Activated CD4-positive, alpha-beta memory T cell treated with anti-CD3 and anti-CD28 coated beads for 36 hours (primary cell): ENCODE measurements at regions of chr3 and their contacts with region 1.

Region 1: GRCh38 chr3:133805527-133806475 is at the start of gene SRPRB:
- DNase-seq: peak; percentile 98
- H3K4me3 Mint-ChIP-seq: peak within 1 kb of the TSS; percentile 98
- H3K27ac Mint-ChIP-seq: peak within 1 kb of the TSS; percentile 94
- H3K4me1 Mint-ChIP-seq: peaks cover 37% of the 10 kb centered on the region
- H3K27me3 Mint-ChIP-seq: peaks cover 5% of the 10 kb centered on the region
- total RNA-seq, gene SRPRB: 65.7 to 66.7 TPM

Region 2: DNA sequence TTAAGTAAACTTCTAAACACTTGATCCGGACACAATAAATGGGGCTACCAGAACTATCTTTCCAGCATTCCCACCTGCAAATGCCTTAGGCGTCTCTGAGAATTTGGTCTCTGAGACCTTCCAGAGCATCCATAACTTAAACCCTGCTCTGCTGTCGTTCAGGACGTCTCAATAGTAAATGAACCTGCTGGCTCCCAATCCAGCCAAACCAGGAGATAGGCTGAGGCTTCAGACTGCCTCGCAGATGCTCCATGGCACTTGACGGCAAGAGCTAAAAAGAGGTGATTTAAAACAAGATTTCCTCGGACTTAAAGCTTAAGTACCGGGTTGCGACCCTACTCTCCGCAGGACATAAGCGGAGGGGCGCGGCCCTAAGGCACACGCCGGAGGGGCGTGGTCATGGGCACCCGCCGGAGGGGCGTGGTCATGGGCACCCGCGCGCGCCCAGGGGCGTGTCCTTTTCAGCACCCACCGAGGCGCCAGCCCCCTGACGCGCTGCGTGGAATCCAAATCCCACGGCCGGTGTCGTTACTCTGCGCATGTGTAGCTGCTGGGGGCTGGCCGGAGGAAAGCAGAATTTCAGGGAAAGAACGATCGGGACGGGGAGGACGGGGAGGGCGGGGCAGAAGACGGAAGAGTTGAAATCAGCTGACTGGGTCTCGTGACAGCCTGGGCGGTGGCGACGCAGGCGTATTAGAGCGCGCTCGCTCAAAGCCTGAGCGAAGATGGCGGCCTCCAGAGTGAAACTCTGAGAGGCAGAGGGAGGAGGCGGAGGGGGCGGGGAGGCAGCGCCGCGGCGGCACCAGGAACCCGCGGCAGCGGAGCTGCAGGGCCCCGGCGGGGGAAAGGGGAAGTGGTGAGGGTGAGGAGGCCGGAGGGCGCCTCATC is 1388.8 kb before region 1 on chr3 and contains the start of gene DNAJC13:
- CTCF ChIA-PET with region 1: no interaction called
- POLR2A ChIA-PET with region 1: no interaction called
- intact Hi-C with region 1: loop called (anchors 1 kb)
- DNase-seq: peak; percentile 94
- H3K4me3 Mint-ChIP-seq: peak within 1 kb of the TSS; percentile 98
- H3K27ac Mint-ChIP-seq: peak within 1 kb of the TSS; percentile 90
- H3K4me1 Mint-ChIP-seq: peaks cover 31% of the 10 kb centered on the region
- H3K27me3 Mint-ChIP-seq: no peaks in the 10 kb centered on the region
- total RNA-seq, gene DNAJC13: 33.5 to 34.5 TPM

Region 3: GRCh38 chr3:133494469-133494868 is 311.3 kb before region 1 on chr3:
- CTCF ChIA-PET with region 1: no interaction called
- POLR2A ChIA-PET with region 1: no interaction called
- intact Hi-C with region 1: loop called (anchors 5 kb)
- DNase-seq: peak; percentile 21
- H3K4me3 Mint-ChIP-seq: no peak overlapping the region
- H3K27ac Mint-ChIP-seq: no peak overlapping the region
- H3K4me1 Mint-ChIP-seq: peaks cover 41% of the 10 kb centered on the region
- H3K27me3 Mint-ChIP-seq: no peaks in the 10 kb centered on the region

Region 4: GRCh38 chr3:133661454-133662277 is 144.1 kb before region 1 on chr3 and contains the start of gene TOPBP1:
- CTCF ChIA-PET with region 1: interaction called, 3 read pairs
- POLR2A ChIA-PET with region 1: no interaction called
- intact Hi-C with region 1: loop called (anchors 1 kb)
- DNase-seq: peak; percentile 94
- H3K4me3 Mint-ChIP-seq: peak within 1 kb of the TSS; percentile 98
- H3K27ac Mint-ChIP-seq: peak within 1 kb of the TSS; percentile 98
- H3K4me1 Mint-ChIP-seq: peaks cover 32% of the 10 kb centered on the region
- H3K27me3 Mint-ChIP-seq: no peaks in the 10 kb centered on the region
- total RNA-seq, gene TOPBP1: 73.9 to 79.1 TPM

Region 5: DNA sequence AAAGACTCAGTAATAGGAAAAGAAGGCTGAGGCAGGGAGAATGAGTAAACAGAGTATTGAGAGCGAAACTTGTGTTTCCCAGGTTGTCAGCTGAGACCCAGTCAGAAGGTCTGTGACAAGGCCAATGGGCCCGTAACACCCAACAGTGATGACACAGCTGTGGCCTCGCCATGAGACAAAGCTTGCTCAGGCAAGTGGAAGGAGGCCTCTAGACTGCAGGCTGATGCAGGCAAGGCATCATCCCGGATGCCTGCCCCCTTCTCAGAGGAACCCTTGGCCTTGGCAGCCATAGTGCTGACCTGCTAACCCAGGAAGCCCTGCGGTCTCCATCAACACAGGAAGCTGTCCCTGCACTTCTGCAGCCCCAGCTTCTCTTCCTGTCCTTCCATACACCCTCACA is 74.5 kb after region 1 on chr3:
- CTCF ChIA-PET with region 1: no interaction called
- POLR2A ChIA-PET with region 1: no interaction called
- intact Hi-C with region 1: loop called (anchors 2 kb)
- DNase-seq: peak; percentile 67
- H3K4me3 Mint-ChIP-seq: no peak overlapping the region
- H3K27ac Mint-ChIP-seq: no peak overlapping the region
- H3K4me1 Mint-ChIP-seq: peaks cover 26% of the 10 kb centered on the region
- H3K27me3 Mint-ChIP-seq: peaks cover 4% of the 10 kb centered on the region

Region 6: DNA sequence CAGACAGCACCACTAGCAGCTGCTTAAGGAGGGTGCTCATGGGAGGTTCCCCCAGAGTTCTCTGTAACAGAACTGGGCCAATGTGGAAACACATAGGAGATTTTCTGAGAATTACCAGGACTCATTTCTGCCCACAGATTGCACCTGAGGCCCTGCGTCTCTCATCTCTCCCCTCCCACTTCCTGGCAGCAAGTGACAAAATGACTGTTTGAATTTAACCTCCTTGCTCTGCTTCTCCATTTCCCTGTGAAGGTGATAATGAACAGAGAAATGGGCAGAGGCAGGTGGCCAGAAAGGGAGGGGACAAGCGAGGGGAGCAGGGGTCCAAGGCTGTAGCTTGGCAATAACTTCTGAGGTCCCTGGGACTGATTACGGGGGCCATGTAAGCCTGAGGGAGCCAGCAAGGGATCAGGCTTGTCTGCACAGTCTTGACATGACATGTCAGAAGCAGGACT is 997.3 kb after region 1 on chr3:
- CTCF ChIA-PET with region 1: no interaction called
- POLR2A ChIA-PET with region 1: no interaction called
- intact Hi-C with region 1: loop called (anchors 5 kb)
- DNase-seq: peak; percentile 71
- H3K4me3 Mint-ChIP-seq: no peak overlapping the region
- H3K27ac Mint-ChIP-seq: peak overlapping the region; percentile 79
- H3K4me1 Mint-ChIP-seq: peaks cover 35% of the 10 kb centered on the region
- H3K27me3 Mint-ChIP-seq: peaks cover 11% of the 10 kb centered on the region